HepG2 (cell line): ENCODE measurements at regions of chr6 and their contacts with region 1.

Region 1: DNA sequence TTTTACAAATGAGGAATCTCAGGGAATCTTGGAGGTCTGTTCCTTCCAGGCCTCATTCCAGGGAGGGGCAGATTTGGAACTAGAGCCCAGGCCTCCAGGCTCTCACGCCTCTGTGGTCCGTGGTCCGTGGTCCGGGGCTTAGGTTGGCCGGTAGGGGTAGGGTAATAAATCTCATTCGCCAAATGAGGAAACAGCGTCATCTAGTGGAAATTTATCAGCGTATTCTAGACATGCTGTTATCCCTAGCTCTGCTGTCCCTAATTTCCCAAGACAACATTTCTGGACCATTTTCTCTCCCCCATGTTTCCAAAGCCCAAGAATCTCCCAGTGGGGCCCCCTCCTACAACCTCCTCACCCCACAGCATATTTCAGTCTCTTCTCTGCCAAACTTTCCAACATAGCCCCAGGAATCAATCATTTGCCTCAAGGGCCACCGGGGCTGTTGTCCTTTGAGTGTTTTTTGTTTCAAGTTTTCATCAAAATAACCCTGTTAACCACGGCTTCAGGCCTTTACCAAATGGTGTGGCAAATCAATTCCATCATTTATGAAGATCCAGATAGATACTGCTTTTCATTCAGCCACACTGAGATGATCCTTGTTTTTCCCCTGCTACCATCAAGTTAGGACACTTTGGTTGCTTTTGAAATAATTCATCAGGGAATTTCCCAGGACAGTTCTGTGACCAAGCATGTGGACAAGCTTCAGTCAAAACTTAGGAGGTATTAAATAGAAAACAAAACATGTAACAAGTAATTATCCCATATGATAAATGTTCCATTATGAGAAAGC is 126.8 kb downstream of the ALDH8A1 start:
- DNase-seq: peak; percentile 82
- ATAC-seq: peak; percentile 100
- H3K4me3 ChIP-seq: no peak overlapping the region
- H3K27ac ChIP-seq: no peak overlapping the region
- H3K4me1 ChIP-seq: no peaks in the 10 kb centered on the region
- H3K27me3 ChIP-seq: peaks cover 2 to 10% of the 10 kb centered on the region in 2 experiments; a peak in 2 of 5 replicates
- CTCF ChIP-seq: peak; percentile 86
- EP300 ChIP-seq: no peak
- POLR2A ChIP-seq: no peak
- RAD21 ChIP-seq: peak; percentile 97

Region 2: DNA sequence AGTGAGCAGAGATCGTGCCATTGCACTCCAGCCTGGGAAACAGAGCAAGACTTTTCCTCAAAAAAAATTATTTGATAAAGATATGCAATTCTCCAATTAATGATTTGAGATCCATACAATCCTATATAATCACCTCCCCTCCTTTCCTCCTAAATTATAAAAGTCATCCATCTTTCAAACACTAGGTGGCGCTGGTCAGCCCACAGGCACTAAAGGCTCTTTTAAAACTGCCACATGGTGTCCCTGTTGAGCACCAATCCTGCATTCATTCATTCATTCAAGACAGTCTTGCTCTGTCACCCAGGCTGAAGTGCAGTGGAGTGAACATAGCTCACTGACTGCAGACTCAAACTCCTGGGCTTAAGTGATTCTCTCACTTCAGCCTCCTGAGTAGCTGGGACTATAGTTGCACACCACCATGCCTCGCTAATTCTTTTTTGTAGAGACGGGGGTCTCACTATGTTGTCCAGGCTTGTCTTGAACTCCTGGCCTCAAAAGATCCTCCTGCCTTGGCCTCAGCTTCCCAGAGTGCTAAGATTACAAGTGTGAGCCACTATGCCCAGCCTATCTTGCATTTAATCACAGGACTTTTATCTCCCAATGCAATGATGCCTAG is 711.9 kb before region 1 on chr6:
- CTCF ChIA-PET with region 1: interaction called, 18 read pairs
- POLR2A ChIA-PET with region 1: no interaction called
- in situ Hi-C with region 1: no loop called
- intact Hi-C with region 1: loop called (anchors 1 kb)
- DNase-seq: peak; percentile 82
- ATAC-seq: peak; percentile 57
- H3K4me3 ChIP-seq: no peak overlapping the region
- H3K27ac ChIP-seq: no peak overlapping the region
- H3K4me1 ChIP-seq: no peaks in the 10 kb centered on the region
- H3K27me3 ChIP-seq: peaks cover 0 to 11% of the 10 kb centered on the region in 2 experiments; a peak in 1 of 5 replicates
- CTCF ChIP-seq: peak; percentile 88
- EP300 ChIP-seq: no peak
- POLR2A ChIP-seq: no peak
- RAD21 ChIP-seq: peak; percentile 83

Region 3: DNA sequence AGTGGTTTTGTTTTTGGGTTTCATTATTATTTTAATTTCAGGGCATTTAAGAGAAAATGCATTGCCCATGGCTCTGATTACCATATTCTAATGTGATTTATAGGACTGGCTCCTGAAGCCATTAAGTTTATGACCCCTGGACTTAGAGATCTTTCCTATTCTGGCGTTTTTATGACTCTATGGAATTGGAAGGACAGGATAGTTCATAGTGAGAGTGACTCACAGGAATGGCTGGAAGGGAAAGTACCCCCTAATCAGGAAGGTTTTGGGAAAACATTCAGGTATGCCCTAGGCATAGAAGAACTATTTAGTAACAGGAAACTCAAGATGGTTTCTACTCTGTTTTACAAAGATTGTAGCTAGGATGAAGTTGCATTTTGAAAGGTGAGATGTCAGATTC is 662.1 kb before region 1 on chr6:
- CTCF ChIA-PET with region 1: interaction called, 65 read pairs
- POLR2A ChIA-PET with region 1: no interaction called
- in situ Hi-C with region 1: loop called (anchors 5 kb)
- intact Hi-C with region 1: loop called (anchors 1 kb)
- DNase-seq: no peak
- ATAC-seq: no peak
- H3K4me3 ChIP-seq: no peak overlapping the region
- H3K27ac ChIP-seq: no peak overlapping the region
- H3K4me1 ChIP-seq: no peaks in the 10 kb centered on the region
- H3K27me3 ChIP-seq: no peaks in the 10 kb centered on the region
- CTCF ChIP-seq: no peak
- EP300 ChIP-seq: no peak
- POLR2A ChIP-seq: no peak
- RAD21 ChIP-seq: no peak

Region 4: GRCh38 chr6:134853111-134854055 is 30.3 kb after region 1 on chr6:
- CTCF ChIA-PET with region 1: no interaction called
- POLR2A ChIA-PET with region 1: no interaction called
- in situ Hi-C with region 1: no loop called
- intact Hi-C with region 1: no loop called
- DNase-seq: peak; percentile 69
- ATAC-seq: peak; percentile 72
- H3K4me3 ChIP-seq: no peak overlapping the region
- H3K27ac ChIP-seq: no peak overlapping the region
- H3K4me1 ChIP-seq: peaks cover 20% of the 10 kb centered on the region
- H3K27me3 ChIP-seq: no peaks in the 10 kb centered on the region
- CTCF ChIP-seq: no peak
- EP300 ChIP-seq: peak in 1 of 2 experiments; percentile 46; a peak in 1 of 4 replicates
- POLR2A ChIP-seq: no peak
- RAD21 ChIP-seq: no peak

Region 5: GRCh38 chr6:134882426-134883038 is 59.4 kb after region 1 on chr6:
- CTCF ChIA-PET with region 1: no interaction called
- POLR2A ChIA-PET with region 1: no interaction called
- in situ Hi-C with region 1: no loop called
- intact Hi-C with region 1: loop called (anchors 2 kb)
- DNase-seq: peak; percentile 43
- ATAC-seq: peak; percentile 79
- H3K4me3 ChIP-seq: no peak overlapping the region
- H3K27ac ChIP-seq: no peak overlapping the region
- H3K4me1 ChIP-seq: no peaks in the 10 kb centered on the region
- H3K27me3 ChIP-seq: no peaks in the 10 kb centered on the region
- CTCF ChIP-seq: peak; percentile 87
- EP300 ChIP-seq: no peak
- POLR2A ChIP-seq: no peak
- RAD21 ChIP-seq: peak; percentile 85